MCF 10A (cell line): ENCODE measurements at regions of chr6 and their contacts with region 1.

Region 1: GRCh38 chr6:156776840-156777576 is at the start of gene ARID1B:
- DNase-seq: peak; percentile 79
- H3K4me3 Mint-ChIP-seq: peak within 1 kb of the TSS; percentile 79
- H3K27ac Mint-ChIP-seq: peak within 1 kb of the TSS; percentile 94
- H3K4me1 Mint-ChIP-seq: peaks cover 19% of the 10 kb centered on the region
- H3K27me3 Mint-ChIP-seq: no peaks in the 10 kb centered on the region
- CTCF ChIP-seq: no peak
- total RNA-seq, gene ARID1B: 62.2 and 63.9 TPM in 2 replicates

Region 2: DNA sequence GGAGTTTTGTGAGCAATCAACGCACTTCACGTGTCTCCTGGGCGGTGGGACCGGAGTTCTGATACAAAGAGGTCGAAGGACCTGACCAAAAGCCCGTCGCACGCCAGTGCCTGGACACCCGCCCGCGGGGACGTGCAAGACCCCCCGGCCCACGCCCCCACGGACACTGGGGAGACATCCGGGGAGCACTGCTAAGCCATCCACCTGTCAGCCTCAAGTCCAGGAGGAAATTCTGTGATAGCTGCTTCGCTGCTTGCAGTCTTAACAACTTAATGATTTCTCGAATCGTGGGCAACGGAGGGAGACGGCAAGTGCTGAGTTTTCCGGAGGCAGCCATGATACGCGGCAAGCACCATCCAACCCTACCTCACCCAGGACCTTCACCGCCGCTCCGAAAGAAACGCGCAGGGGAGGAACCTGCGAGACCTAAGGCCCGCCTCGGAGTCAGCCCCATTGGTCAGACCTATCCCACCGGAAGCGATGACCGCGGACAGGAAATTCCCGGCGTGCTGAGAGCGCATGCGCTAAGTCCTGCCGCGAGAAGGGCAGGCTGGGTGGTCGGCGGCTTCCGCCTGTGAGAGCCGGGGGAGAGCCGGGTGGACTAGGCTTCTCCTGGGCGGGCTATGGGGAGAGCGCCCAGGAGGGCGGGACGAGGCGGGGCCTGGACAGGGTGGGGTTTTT is 1462.8 kb before region 1 on chr6 and contains the start of gene TFB1M:
- CTCF ChIA-PET with region 1: no interaction called
- POLR2A ChIA-PET with region 1: interaction called, 6 read pairs
- intact Hi-C with region 1: loop called (anchors 5 kb)
- DNase-seq: peak; percentile 98
- H3K4me3 Mint-ChIP-seq: peak within 1 kb of the TSS; percentile 79
- H3K27ac Mint-ChIP-seq: peak within 1 kb of the TSS; percentile 97
- H3K4me1 Mint-ChIP-seq: peaks cover 8% of the 10 kb centered on the region
- H3K27me3 Mint-ChIP-seq: no peaks in the 10 kb centered on the region
- CTCF ChIP-seq: no peak
- total RNA-seq, gene TFB1M: 26.8 and 31.0 TPM in 2 replicates

Region 3: GRCh38 chr6:156645097-156645496 is 131.9 kb before region 1 on chr6:
- CTCF ChIA-PET with region 1: no interaction called
- POLR2A ChIA-PET with region 1: no interaction called
- intact Hi-C with region 1: no loop called
- DNase-seq: no peak
- H3K4me3 Mint-ChIP-seq: no peak overlapping the region
- H3K27ac Mint-ChIP-seq: no peak overlapping the region
- H3K4me1 Mint-ChIP-seq: no peaks in the 10 kb centered on the region
- H3K27me3 Mint-ChIP-seq: peaks cover 14% of the 10 kb centered on the region
- CTCF ChIP-seq: no peak

Region 4: DNA sequence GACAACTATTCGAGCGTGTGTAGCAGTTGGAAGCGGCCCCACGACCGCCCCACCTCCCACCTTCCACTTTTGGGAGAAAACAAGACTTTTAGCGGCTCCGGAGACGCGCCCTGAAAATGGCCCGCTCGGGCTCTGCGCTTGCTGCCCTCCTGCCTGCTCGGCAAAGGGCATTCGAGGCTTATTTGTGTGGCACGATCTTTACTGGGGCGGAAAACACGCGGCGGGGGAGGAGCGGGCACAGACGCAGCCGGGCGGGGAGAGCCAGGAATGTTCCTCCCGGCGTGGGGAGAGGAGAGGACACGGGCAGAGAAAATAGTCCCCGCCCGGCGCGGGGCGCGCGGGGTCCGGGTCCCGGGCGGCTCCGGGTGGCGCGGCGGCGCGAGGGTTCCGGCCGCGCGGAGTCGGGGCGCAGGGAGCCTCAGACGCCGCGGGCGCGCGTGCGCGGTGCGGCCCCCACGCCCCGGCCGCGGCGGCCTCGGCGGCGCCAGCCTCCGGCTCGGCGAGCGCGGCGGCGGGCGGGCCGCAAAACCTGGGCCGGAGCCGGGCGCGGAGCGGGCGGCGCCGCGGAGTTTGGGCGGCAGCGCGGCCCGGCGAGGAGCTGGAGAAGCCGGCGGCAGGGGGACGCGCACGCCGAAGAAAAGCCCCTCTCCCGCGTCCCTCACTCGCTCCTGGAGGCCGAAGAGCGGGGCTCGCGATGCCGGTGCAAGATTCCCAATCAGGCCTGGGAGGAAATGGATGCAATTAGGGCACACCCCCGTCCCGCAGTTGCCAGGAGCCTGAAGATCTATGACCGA is 89.8 kb before region 1 on chr6:
- CTCF ChIA-PET with region 1: interaction called, 3 read pairs
- POLR2A ChIA-PET with region 1: interaction called, 85 read pairs
- intact Hi-C with region 1: loop called (anchors 1 kb)
- DNase-seq: peak; percentile 70
- H3K4me3 Mint-ChIP-seq: peak overlapping the region; percentile 74
- H3K27ac Mint-ChIP-seq: peak overlapping the region; percentile 61
- H3K4me1 Mint-ChIP-seq: peaks cover 8% of the 10 kb centered on the region
- H3K27me3 Mint-ChIP-seq: no peaks in the 10 kb centered on the region
- CTCF ChIP-seq: no peak

Region 5: DNA sequence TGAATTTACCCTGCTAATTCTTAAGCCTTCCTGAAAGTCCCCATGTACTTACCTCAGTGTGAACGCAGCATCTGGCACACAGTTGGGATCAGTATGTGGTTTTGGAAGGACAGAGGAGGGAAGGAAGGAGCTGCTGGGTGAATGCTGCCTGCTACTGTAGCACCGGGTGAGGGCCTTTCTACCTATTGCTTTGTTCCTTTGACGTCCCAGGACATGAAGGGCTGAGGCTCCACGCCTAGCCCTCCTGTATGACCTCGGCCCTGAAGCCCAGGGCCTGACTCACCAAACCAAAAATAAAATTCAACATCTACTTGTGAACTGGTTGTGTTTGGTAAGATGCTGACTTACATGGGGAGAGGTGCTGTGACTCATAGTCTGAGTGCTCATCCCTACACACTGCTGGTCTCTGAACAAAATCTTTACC is 51.3 kb after region 1 on chr6:
- CTCF ChIA-PET with region 1: no interaction called
- POLR2A ChIA-PET with region 1: interaction called, 12 read pairs
- intact Hi-C with region 1: no loop called
- DNase-seq: peak; percentile 93
- H3K4me3 Mint-ChIP-seq: peak overlapping the region; percentile 24
- H3K27ac Mint-ChIP-seq: peak overlapping the region; percentile 81
- H3K4me1 Mint-ChIP-seq: peaks cover 33% of the 10 kb centered on the region
- H3K27me3 Mint-ChIP-seq: no peaks in the 10 kb centered on the region
- CTCF ChIP-seq: no peak

Region 6: DNA sequence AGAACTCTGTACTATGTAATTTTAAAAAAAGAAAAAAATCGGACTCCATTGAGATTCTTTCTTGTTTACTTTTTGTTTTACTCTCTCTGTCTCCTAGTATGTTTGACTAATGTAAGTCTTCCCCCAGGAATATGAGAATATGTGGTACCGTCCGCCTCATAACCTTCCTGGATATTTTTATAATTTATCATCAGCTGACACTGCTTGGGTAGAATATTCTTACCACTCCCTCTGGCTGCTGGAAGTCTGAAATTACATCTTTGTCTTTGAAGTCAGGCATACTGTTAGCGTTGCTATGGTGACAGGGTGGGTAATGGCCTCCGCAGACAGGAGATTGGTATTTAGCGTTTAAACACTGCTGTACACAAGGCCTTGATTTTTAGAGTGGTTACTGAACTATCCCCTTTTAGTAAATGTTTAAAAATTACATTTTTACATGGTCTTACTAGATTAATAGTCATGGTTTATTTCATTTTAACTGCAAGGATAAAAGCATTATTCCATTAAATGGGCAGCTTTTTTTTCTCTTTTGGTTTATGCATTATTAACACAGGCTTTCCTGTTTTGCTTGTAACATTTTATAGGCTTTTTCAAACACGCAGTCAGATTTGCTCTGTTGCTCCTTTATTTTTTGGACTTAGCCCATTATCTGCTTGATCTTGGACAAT is 176.6 kb after region 1 on chr6:
- CTCF ChIA-PET with region 1: interaction called, 3 read pairs
- POLR2A ChIA-PET with region 1: interaction called, 72 read pairs
- intact Hi-C with region 1: loop called (anchors 1 kb)
- DNase-seq: peak; percentile 90
- H3K4me3 Mint-ChIP-seq: peak overlapping the region; percentile 58
- H3K27ac Mint-ChIP-seq: peak overlapping the region; percentile 93
- H3K4me1 Mint-ChIP-seq: peaks cover 56% of the 10 kb centered on the region
- H3K27me3 Mint-ChIP-seq: no peaks in the 10 kb centered on the region
- CTCF ChIP-seq: no peak

Region 7: DNA sequence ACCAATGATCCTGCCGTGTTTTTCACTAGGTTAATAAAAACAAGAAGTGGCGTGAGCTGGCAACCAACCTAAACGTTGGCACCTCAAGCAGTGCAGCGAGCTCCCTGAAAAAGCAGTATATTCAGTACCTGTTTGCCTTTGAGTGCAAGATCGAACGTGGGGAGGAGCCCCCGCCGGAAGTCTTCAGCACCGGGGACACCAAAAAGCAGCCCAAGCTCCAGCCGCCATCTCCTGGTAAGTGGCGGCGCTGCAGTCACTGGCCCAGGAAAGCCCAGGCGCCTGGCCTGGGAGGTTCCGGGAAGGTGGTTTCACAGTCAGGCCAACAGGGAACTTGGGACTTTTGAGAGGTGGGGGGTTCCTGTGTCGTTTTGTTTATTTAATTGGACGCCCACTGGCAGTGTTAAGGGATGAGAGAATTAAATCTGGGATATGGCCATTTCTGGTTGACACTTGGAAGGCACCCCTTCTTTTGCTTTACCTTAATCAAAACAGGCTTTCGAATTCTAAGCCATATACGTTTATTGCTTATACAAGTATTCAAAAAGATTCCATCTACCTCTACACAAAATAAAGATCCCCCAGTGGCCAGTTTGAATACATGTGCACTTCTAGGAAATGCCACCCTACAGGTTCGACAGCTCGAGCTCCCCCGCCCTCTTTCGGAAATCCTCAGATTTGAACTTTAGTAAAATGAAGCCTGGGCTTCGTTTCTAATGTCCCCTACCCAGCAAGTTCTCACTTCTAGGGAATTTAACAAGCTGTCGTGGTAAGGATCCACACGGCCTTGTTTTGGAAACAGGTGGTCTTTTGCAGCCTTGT is 407.4 kb after region 1 on chr6:
- CTCF ChIA-PET with region 1: no interaction called
- POLR2A ChIA-PET with region 1: no interaction called
- intact Hi-C with region 1: loop called (anchors 5 kb)
- DNase-seq: peak; percentile 57
- H3K4me3 Mint-ChIP-seq: no peak overlapping the region
- H3K27ac Mint-ChIP-seq: no peak overlapping the region
- H3K4me1 Mint-ChIP-seq: peaks cover 14% of the 10 kb centered on the region
- H3K27me3 Mint-ChIP-seq: no peaks in the 10 kb centered on the region
- CTCF ChIP-seq: peak; percentile 94